CD8-positive, alpha-beta memory T cell (primary cell): ENCODE measurements at regions of chr1 and their contacts with region 1.

Region 1: GRCh38 chr1:26787706-26788514 is at the start of gene PIGV:
- DNase-seq: peak; percentile 82 to 93 (median 89)
- H3K4me3 ChIP-seq: peak within 1 kb of the TSS; percentile 92
- H3K4me3 Mint-ChIP-seq: peak within 1 kb of the TSS; percentile 90 to 100 (median 100)
- H3K27ac ChIP-seq: peak within 1 kb of the TSS; percentile 88
- H3K27ac Mint-ChIP-seq: peak within 1 kb of the TSS; percentile 100
- H3K4me1 ChIP-seq: peaks cover 71% of the 10 kb centered on the region
- H3K4me1 Mint-ChIP-seq: peaks cover 73 to 87% (median 81%) of the 10 kb centered on the region in 3 donors
- H3K27me3 ChIP-seq: no peaks in the 10 kb centered on the region
- H3K27me3 Mint-ChIP-seq: peaks cover 0 to 5% of the 10 kb centered on the region in 2 donors
- total RNA-seq, gene PIGV: 23.6 to 24.9 TPM

Region 2: GRCh38 chr1:26500488-26501175 is 287.3 kb before region 1 on chr1:
- CTCF ChIA-PET with region 1: interaction called, 19 read pairs
- POLR2A ChIA-PET with region 1: interaction called, 3 read pairs
- DNase-seq: peak; percentile 79 to 91 (median 85)
- H3K4me3 ChIP-seq: peak overlapping the region; percentile 89
- H3K4me3 Mint-ChIP-seq: peak overlapping the region; percentile 74 to 94 (median 86)
- H3K27ac ChIP-seq: peak overlapping the region; percentile 82
- H3K27ac Mint-ChIP-seq: peak overlapping the region; percentile 87 to 97 (median 91)
- H3K4me1 ChIP-seq: peaks cover 17% of the 10 kb centered on the region
- H3K4me1 Mint-ChIP-seq: peaks cover 5 to 20% (median 13%) of the 10 kb centered on the region in 3 donors
- H3K27me3 ChIP-seq: no peaks in the 10 kb centered on the region
- H3K27me3 Mint-ChIP-seq: no peaks in the 10 kb centered on the region

Region 3: GRCh38 chr1:26677306-26678115 is 110.4 kb before region 1 on chr1:
- CTCF ChIA-PET with region 1: interaction called, 11 read pairs
- POLR2A ChIA-PET with region 1: interaction called, 7 read pairs
- DNase-seq: peak; percentile 14 to 67 (median 40)
- H3K4me3 ChIP-seq: no peak overlapping the region
- H3K4me3 Mint-ChIP-seq: peak overlapping the region in 4 of 7 donors; percentile 29 to 64 (median 52)
- H3K27ac ChIP-seq: no peak overlapping the region
- H3K27ac Mint-ChIP-seq: peak overlapping the region in 7 of 8 donors; percentile 18 to 86 (median 43)
- H3K4me1 ChIP-seq: peaks cover 14% of the 10 kb centered on the region
- H3K4me1 Mint-ChIP-seq: peaks cover 12 to 22% (median 17%) of the 10 kb centered on the region in 3 donors
- H3K27me3 ChIP-seq: no peaks in the 10 kb centered on the region
- H3K27me3 Mint-ChIP-seq: no peaks in the 10 kb centered on the region

Region 4: DNA sequence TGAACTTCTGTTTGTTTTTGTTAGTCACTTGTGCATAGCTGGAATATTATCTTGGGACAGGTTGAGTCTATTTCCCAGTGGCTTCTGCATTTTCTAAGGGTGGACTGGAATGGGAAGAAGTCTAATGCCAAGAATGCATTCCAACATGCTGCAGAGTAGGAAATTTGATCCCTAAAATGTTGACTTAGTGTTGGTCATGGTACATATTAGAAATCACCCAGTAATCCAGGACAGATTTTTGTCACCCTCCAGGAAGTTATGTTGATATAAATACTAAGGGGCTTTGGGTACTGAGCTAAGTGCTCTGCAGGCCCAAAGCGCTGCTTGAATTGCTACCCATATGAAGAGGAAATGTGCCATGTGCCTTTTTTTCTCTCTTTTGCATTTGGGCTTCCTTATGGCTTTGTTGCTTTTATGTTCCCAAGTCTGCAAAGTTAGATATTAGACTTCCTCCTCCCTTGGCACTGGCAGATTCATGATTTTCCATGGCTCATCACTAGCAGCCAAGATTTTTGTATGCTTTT is 82.1 kb before region 1 on chr1:
- CTCF ChIA-PET with region 1: interaction called, 63 read pairs
- POLR2A ChIA-PET with region 1: interaction called, 3 read pairs
- DNase-seq: no peak
- H3K4me3 ChIP-seq: peak overlapping the region; percentile 19
- H3K4me3 Mint-ChIP-seq: peak overlapping the region in 5 of 7 donors; percentile 57 to 73 (median 60)
- H3K27ac ChIP-seq: no peak overlapping the region
- H3K27ac Mint-ChIP-seq: peak overlapping the region; percentile 4 to 84 (median 70)
- H3K4me1 ChIP-seq: peaks cover 74% of the 10 kb centered on the region
- H3K4me1 Mint-ChIP-seq: peaks cover 18 to 45% (median 42%) of the 10 kb centered on the region in 3 donors
- H3K27me3 ChIP-seq: no peaks in the 10 kb centered on the region
- H3K27me3 Mint-ChIP-seq: no peaks in the 10 kb centered on the region

Region 5: GRCh38 chr1:26744075-26744959 is 43.6 kb before region 1 on chr1:
- CTCF ChIA-PET with region 1: interaction called, 13 read pairs
- POLR2A ChIA-PET with region 1: interaction called, 12 read pairs
- DNase-seq: peak; percentile 56 to 87 (median 81)
- H3K4me3 ChIP-seq: peak overlapping the region; percentile 37
- H3K4me3 Mint-ChIP-seq: peak overlapping the region; percentile 8 to 84 (median 59)
- H3K27ac ChIP-seq: peak overlapping the region; percentile 41
- H3K27ac Mint-ChIP-seq: peak overlapping the region; percentile 73 to 98 (median 92)
- H3K4me1 ChIP-seq: peaks cover 86% of the 10 kb centered on the region
- H3K4me1 Mint-ChIP-seq: peaks cover 79 to 93% (median 87%) of the 10 kb centered on the region in 3 donors
- H3K27me3 ChIP-seq: no peaks in the 10 kb centered on the region
- H3K27me3 Mint-ChIP-seq: peaks cover 0 to 2% of the 10 kb centered on the region in 2 donors

Region 6: GRCh38 chr1:26811057-26811456 is 23.1 kb after region 1 on chr1:
- CTCF ChIA-PET with region 1: interaction called, 32 read pairs
- POLR2A ChIA-PET with region 1: no interaction called
- DNase-seq: peak in 1 of 5 donors; percentile 60
- H3K4me3 ChIP-seq: no peak overlapping the region
- H3K4me3 Mint-ChIP-seq: peak overlapping the region; percentile 11 to 76 (median 55)
- H3K27ac ChIP-seq: no peak overlapping the region
- H3K27ac Mint-ChIP-seq: peak overlapping the region; percentile 59 to 96 (median 92)
- H3K4me1 ChIP-seq: peaks cover 11% of the 10 kb centered on the region
- H3K4me1 Mint-ChIP-seq: peaks cover 21% of the 10 kb centered on the region in 3 donors
- H3K27me3 ChIP-seq: no peaks in the 10 kb centered on the region
- H3K27me3 Mint-ChIP-seq: no peaks in the 10 kb centered on the region

Region 7: DNA sequence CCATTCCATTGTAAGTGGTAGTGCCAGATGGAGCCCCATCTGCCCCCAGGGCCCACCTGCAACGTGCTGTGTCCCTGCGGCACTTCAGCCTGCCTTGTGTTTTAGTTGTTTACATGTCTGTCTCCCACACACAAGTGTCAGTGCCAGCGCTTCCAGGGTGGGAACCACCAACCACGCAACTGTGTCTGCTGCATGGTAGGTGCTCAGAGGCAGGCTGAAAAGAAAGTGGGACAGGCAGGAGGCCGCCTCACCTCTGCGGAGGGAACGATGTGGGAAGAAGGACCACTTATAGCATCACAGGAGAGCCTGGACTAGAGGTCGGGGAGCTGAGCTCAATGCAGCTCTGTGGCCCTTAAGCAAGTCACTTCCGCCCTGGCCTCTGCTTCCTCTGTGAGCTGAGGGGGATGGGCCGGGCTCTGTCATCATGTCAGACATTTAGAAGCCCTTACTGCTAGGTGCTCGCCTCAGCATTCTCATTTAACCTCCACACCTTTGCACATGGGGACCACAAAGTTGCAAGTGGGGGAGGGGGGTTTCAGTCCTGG is 349.2 kb after region 1 on chr1:
- CTCF ChIA-PET with region 1: no interaction called
- POLR2A ChIA-PET with region 1: no interaction called
- DNase-seq: peak; percentile 54 to 88 (median 70)
- H3K4me3 ChIP-seq: peak overlapping the region; percentile 56
- H3K4me3 Mint-ChIP-seq: peak overlapping the region; percentile 65 to 95 (median 90)
- H3K27ac ChIP-seq: peak overlapping the region; percentile 82
- H3K27ac Mint-ChIP-seq: peak overlapping the region; percentile 98 to 100 (median 100)
- H3K4me1 ChIP-seq: peaks cover 41% of the 10 kb centered on the region
- H3K4me1 Mint-ChIP-seq: peaks cover 40 to 44% (median 43%) of the 10 kb centered on the region in 3 donors
- H3K27me3 ChIP-seq: no peaks in the 10 kb centered on the region
- H3K27me3 Mint-ChIP-seq: no peaks in the 10 kb centered on the region